Activated B cell treated with CpG ODN at 0.5 μM for 24 hours (primary cell): ENCODE measurements at regions of chr4 and their contacts with region 1.

Region 1: GRCh38 chr4:47836641-47837093 is 1.2 kb downstream of the CORIN start:
- DNase-seq: peak; percentile 23
- ATAC-seq: peak; percentile 45
- H3K4me3 Mint-ChIP-seq: peak overlapping the region; percentile 86
- H3K27ac Mint-ChIP-seq: no peak overlapping the region
- H3K4me1 Mint-ChIP-seq: peaks cover 37% of the 10 kb centered on the region
- H3K27me3 Mint-ChIP-seq: peaks cover 31% of the 10 kb centered on the region
- CTCF ChIP-seq: no peak

Region 2: DNA sequence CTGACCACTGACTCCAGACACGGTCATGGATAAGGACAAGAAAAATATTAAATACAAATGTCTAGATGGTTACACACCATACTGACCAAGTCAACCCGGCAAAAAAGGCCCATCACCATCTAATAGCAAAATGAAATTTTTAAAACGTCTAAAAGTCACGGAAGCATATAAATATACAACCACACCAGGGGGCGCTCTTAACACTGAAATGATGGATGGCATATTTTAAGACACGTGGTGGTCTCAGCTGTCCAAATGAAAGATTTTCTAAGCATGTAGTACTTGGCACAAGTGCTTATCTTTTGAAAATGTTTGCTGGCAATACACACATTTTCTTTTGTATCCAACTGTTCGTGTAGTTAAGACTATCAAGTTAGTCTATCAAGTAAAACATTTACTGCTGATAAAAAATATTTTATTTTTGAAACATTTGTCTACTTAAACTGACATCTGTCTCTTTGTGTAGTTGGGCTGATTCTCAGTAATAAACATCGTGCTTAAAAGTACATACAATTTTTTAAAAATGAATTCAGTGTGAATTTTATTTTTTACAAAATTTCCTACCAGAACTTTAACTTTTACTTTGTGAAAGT is 992.2 kb before region 1 on chr4:
- CTCF ChIA-PET with region 1: no interaction called
- POLR2A ChIA-PET with region 1: no interaction called
- intact Hi-C with region 1: loop called (anchors 10 kb)
- DNase-seq: no peak
- ATAC-seq: no peak
- H3K4me3 Mint-ChIP-seq: no peak overlapping the region
- H3K27ac Mint-ChIP-seq: no peak overlapping the region
- H3K4me1 Mint-ChIP-seq: no peaks in the 10 kb centered on the region
- H3K27me3 Mint-ChIP-seq: no peaks in the 10 kb centered on the region
- CTCF ChIP-seq: peak; percentile 61

Region 3: GRCh38 chr4:47383829-47384427 is 452.7 kb before region 1 on chr4:
- CTCF ChIA-PET with region 1: no interaction called
- POLR2A ChIA-PET with region 1: no interaction called
- intact Hi-C with region 1: loop called (anchors 1 kb)
- DNase-seq: no peak
- ATAC-seq: no peak
- H3K4me3 Mint-ChIP-seq: no peak overlapping the region
- H3K27ac Mint-ChIP-seq: no peak overlapping the region
- H3K4me1 Mint-ChIP-seq: no peaks in the 10 kb centered on the region
- H3K27me3 Mint-ChIP-seq: peaks cover 8% of the 10 kb centered on the region
- CTCF ChIP-seq: no peak

Region 4: DNA sequence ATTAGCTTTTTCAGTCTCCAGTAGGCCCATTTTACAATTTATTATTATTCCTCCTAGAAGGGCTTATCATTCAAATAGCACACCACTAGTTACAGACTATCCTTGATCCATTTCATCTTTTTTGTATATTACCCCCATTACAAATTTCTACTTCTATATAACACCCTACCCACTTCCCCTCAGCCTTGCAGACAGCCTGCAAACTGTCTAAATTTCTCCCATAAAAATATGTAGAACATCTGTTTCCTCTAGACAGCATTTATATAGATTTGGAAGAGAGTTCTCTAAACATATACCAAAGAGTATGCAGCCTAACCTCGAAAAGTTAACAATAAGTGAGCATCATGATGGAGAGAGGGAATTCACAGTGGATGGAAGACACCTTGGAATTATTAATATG is 403.9 kb before region 1 on chr4:
- CTCF ChIA-PET with region 1: no interaction called
- POLR2A ChIA-PET with region 1: no interaction called
- intact Hi-C with region 1: no loop called
- DNase-seq: no peak
- ATAC-seq: no peak
- H3K4me3 Mint-ChIP-seq: no peak overlapping the region
- H3K27ac Mint-ChIP-seq: no peak overlapping the region
- H3K4me1 Mint-ChIP-seq: no peaks in the 10 kb centered on the region
- H3K27me3 Mint-ChIP-seq: no peaks in the 10 kb centered on the region
- CTCF ChIP-seq: no peak

Region 5: GRCh38 chr4:47519239-47519883 is 317.3 kb before region 1 on chr4:
- CTCF ChIA-PET with region 1: no interaction called
- POLR2A ChIA-PET with region 1: no interaction called
- intact Hi-C with region 1: no loop called
- DNase-seq: no peak
- ATAC-seq: peak; percentile 99
- H3K4me3 Mint-ChIP-seq: no peak overlapping the region
- H3K27ac Mint-ChIP-seq: peak overlapping the region; percentile 69
- H3K4me1 Mint-ChIP-seq: peaks cover 20% of the 10 kb centered on the region
- H3K27me3 Mint-ChIP-seq: no peaks in the 10 kb centered on the region
- CTCF ChIP-seq: no peak

Region 6: GRCh38 chr4:47668810-47669408 is 167.8 kb before region 1 on chr4:
- CTCF ChIA-PET with region 1: interaction called, 4 read pairs
- POLR2A ChIA-PET with region 1: no interaction called
- intact Hi-C with region 1: loop called (anchors 2 kb)
- DNase-seq: no peak
- ATAC-seq: peak; percentile 54
- H3K4me3 Mint-ChIP-seq: no peak overlapping the region
- H3K27ac Mint-ChIP-seq: no peak overlapping the region
- H3K4me1 Mint-ChIP-seq: no peaks in the 10 kb centered on the region
- H3K27me3 Mint-ChIP-seq: peaks cover 7% of the 10 kb centered on the region
- CTCF ChIP-seq: peak; percentile 32

Region 7: DNA sequence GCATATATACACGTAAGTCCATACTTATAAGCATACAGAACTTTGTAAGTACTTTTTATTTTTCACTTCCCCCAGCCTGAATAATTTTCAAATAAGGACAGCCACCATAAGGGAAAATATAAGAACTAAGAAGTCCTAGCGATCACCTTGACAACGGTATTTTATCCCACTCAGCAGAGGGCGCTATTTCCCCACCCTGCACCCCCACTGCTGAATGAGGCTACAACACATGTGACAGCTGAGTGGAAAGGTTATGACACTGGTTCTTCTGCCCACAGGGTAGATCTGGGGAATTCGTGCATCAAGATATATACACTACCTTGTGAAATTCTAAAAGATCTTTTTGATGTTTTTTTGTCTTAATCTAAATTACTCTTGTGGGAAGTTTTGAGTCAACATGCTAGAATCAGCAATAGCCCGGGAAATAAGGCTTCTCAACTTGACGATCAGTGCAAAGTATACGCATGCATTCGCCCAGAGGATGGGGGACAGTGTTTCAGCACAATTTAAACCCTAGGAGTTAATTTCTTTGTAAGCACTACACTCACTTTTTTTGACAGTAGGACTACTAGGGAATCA is 150.3 kb before region 1 on chr4:
- CTCF ChIA-PET with region 1: interaction called, 6 read pairs
- POLR2A ChIA-PET with region 1: no interaction called
- intact Hi-C with region 1: loop called (anchors 1 kb)
- DNase-seq: peak; percentile 19
- ATAC-seq: peak; percentile 37
- H3K4me3 Mint-ChIP-seq: no peak overlapping the region
- H3K27ac Mint-ChIP-seq: no peak overlapping the region
- H3K4me1 Mint-ChIP-seq: no peaks in the 10 kb centered on the region
- H3K27me3 Mint-ChIP-seq: peaks cover 2% of the 10 kb centered on the region
- CTCF ChIP-seq: no peak

Region 8: DNA sequence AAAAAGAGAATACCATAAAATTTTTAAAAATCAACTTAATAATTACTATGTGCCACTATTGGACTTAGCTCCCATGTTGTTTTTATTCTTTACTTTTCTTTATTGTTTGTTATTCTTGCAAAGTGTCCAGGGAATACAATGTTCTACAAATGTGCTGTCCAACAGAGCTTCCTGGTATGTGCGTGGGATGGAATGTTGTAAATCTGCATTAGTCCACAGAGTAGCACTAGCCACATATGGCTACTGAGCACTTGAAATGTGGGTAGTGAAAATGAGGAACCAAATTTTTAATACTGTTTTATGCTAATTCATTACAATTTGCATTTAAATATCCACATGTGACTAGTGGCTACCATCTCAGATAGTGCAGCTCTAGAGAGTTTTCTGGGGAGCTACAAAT is 15.5 kb after region 1 on chr4:
- CTCF ChIA-PET with region 1: interaction called, 3 read pairs
- POLR2A ChIA-PET with region 1: no interaction called
- intact Hi-C with region 1: loop called (anchors 1 kb)
- DNase-seq: no peak
- ATAC-seq: no peak
- H3K4me3 Mint-ChIP-seq: no peak overlapping the region
- H3K27ac Mint-ChIP-seq: no peak overlapping the region
- H3K4me1 Mint-ChIP-seq: no peaks in the 10 kb centered on the region
- H3K27me3 Mint-ChIP-seq: no peaks in the 10 kb centered on the region
- CTCF ChIP-seq: no peak

Region 9: GRCh38 chr4:47873877-47874541 is 37.3 kb after region 1 on chr4:
- CTCF ChIA-PET with region 1: no interaction called
- POLR2A ChIA-PET with region 1: no interaction called
- intact Hi-C with region 1: no loop called
- DNase-seq: no peak
- ATAC-seq: no peak
- H3K4me3 Mint-ChIP-seq: no peak overlapping the region
- H3K27ac Mint-ChIP-seq: no peak overlapping the region
- H3K4me1 Mint-ChIP-seq: no peaks in the 10 kb centered on the region
- H3K27me3 Mint-ChIP-seq: no peaks in the 10 kb centered on the region
- CTCF ChIP-seq: no peak

Region 10: DNA sequence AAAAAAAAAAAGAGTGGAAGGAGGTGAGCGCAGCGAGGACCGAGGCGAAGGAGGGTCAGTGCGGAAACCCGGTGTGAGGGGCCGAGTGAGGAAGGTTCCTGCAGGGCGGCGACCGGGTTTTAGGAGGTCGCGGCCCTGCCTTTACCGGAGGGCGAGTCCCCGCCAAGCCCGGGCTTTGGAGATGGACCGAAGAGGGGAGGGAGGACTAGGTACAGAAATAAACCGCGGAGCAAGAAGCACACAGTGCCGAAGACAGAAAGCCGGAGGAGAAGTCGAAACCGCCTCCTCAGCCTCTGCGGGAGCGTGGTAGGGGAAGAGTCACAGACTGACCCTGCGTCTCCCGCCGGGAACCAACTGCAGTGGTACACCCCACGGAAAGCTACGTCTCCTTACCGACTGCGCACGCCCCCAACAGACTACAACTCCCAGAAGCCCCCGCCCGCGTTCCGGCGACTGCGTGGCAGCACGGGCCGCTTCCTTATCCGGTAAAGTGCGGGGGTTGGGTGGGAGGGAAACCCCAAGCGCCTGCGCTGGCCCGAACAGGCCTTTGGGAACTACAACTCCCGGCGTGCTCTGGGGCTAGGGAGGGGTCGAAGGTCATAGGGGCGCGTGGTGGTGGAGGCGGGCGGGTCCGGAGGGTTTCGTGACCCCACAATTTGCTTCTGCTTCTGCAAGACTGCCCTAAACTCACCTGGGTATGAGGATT is 77.7 kb after region 1 on chr4 and contains the start of gene NFXL1:
- CTCF ChIA-PET with region 1: no interaction called
- POLR2A ChIA-PET with region 1: no interaction called
- intact Hi-C with region 1: loop called (anchors 2 kb)
- DNase-seq: peak; percentile 90
- ATAC-seq: peak; percentile 96
- H3K4me3 Mint-ChIP-seq: peak within 1 kb of the TSS; percentile 98
- H3K27ac Mint-ChIP-seq: peak within 1 kb of the TSS; percentile 92
- H3K4me1 Mint-ChIP-seq: peaks cover 31% of the 10 kb centered on the region
- H3K27me3 Mint-ChIP-seq: no peaks in the 10 kb centered on the region
- CTCF ChIP-seq: no peak
- total RNA-seq, gene NFXL1: 10.0 and 11.1 TPM in 2 replicates

Region 11: DNA sequence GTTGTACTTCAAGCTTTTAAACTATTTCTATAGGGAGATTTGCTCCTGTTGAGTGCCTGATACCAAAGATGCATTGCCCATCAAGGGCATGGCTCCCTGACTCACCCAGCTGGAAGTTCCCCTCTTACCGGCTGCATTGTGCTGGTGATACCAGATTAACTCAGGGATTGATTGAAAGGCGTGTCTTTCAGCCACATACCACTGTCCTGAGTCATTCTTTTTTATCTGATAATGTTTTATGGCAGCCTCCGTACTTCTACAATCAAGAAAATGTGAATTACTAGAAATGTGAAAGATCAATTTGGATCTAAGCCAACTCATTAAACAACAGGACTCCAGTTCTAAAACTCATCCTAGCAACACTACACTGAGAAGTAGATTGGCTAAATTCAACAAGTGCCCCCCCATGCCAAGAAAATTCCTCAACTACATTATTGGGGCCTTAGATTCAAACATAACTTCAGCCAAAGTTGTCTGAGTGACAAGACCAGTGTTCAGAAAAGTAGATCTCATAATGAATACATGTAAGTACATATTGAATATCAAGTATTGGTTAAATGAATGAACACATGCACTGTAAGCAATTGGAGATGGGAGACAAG is 257.4 kb after region 1 on chr4:
- CTCF ChIA-PET with region 1: no interaction called
- POLR2A ChIA-PET with region 1: no interaction called
- intact Hi-C with region 1: no loop called
- DNase-seq: no peak
- ATAC-seq: no peak
- H3K4me3 Mint-ChIP-seq: no peak overlapping the region
- H3K27ac Mint-ChIP-seq: no peak overlapping the region
- H3K4me1 Mint-ChIP-seq: no peaks in the 10 kb centered on the region
- H3K27me3 Mint-ChIP-seq: no peaks in the 10 kb centered on the region
- CTCF ChIP-seq: no peak